Activated T-helper 1 cell treated with anti-CD3 and anti-CD28 coated beads, Interleukin-12 subunit alpha, Interleukin-12 subunit beta, Interleukin-2, Interleukin-4 antibody, amounts not matched to agents 30 ng/mL and 10 ng/mL and 1 ng/mL, durations not matched to agents 14 hours and 24 hours and 36 hours (primary cell): ENCODE measurements at regions of chr22 and their contacts with region 1.

Region 1: GRCh38 chr22:46250035-46250782 is at the start of gene CDPF1:
- DNase-seq: peak; percentile 93
- H3K4me3 Mint-ChIP-seq: peak within 1 kb of the TSS; percentile 87
- H3K27ac Mint-ChIP-seq: peak within 1 kb of the TSS; percentile 74
- H3K4me1 Mint-ChIP-seq: peaks cover 31% of the 10 kb centered on the region
- H3K27me3 Mint-ChIP-seq: peaks cover 2% of the 10 kb centered on the region
- total RNA-seq, gene CDPF1: 9.5 and 14.2 TPM in 2 replicates

Region 2: DNA sequence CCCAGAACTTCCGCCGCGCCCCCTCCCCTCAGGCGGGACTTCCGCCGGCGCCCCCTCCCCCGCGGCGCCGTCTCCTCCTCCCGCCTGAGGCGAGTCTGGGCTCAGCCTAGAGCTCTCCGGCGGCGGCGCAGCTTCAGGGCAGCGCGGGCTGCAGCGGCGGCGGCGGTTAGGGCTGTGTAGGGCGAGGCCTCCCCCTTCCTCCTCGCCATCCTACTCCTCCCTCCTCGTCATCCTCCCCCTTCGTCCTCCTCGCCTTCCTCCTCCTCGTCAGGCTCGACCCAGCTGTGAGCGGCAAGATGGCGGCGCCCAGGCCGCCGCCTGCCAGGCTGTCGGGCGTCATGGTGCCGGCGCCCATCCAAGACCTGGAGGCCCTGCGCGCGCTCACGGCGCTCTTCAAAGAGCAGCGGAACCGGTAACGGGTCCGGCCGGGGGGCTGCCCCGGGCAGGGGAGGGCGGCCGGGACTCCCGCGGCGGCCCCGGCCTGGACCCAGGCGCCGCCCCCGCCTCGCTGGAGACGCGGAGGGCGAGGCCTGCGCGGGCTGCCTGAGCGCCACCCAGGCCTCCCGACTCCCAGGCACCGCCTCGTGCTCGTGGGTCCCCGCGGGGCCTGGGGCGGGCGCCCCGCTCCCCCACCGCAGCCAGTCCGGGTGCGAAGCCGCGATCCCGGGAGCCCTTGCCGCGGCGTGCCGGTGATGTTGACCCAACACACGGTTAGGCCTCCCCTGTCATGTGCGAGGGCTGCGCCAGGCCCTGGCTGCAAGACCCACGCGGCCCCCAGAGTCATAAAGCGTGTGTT is 578.2 kb before region 1 on chr22 and contains the start of gene ATXN10:
- intact Hi-C with region 1: loop called (anchors 5 kb)
- DNase-seq: peak; percentile 69
- H3K4me3 Mint-ChIP-seq: peak within 1 kb of the TSS; percentile 96
- H3K27ac Mint-ChIP-seq: peak within 1 kb of the TSS; percentile 89
- H3K4me1 Mint-ChIP-seq: peaks cover 33% of the 10 kb centered on the region
- H3K27me3 Mint-ChIP-seq: peaks cover 4% of the 10 kb centered on the region
- total RNA-seq, gene ATXN10: 110 and 119 TPM in 2 replicates

Region 3: GRCh38 chr22:46150034-46150654 is 100.1 kb before region 1 on chr22 and contains the start of gene PPARA:
- intact Hi-C with region 1: loop called (anchors 1 kb)
- DNase-seq: peak; percentile 88
- H3K4me3 Mint-ChIP-seq: peak within 1 kb of the TSS; percentile 85
- H3K27ac Mint-ChIP-seq: peak within 1 kb of the TSS; percentile 63
- H3K4me1 Mint-ChIP-seq: peaks cover 18% of the 10 kb centered on the region
- H3K27me3 Mint-ChIP-seq: peaks cover 21% of the 10 kb centered on the region
- total RNA-seq, gene PPARA: 11.6 and 14.3 TPM in 2 replicates

Region 4: DNA sequence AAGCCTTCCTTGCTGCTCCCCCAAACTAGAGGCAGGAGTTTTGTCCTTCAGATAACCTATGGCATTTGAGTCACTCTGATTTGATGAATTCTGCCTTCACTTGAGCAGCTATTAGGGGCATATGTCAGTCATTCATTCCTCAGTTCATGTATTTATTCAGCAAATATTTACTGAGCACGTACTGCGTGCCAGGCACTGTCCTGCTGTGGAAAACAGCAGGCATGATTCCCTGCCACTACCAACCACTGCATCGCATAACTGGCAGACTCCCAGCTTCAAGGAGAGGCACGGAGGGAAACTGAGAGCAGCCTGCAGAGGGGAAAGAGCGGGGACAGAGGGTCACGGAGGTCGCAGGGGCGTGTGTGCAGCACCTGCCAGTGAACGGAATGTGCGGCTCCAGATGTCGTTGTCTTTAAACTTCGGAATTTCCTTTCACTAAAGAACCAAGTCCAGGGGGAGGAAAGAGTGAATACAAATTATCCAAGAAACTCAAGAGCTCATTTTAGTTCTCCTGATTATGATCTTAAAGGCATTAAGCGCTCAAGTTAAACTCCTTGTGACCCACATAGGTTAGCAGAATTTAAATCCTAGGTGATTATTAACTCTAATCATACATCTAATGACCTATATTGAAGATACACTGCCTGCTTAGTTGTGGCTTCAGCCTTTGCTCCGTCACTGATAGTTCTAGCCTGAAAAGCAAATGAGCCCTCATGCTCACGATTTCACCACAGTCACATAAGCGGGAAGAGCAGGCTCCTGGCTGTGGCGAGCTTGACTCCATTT is 87.2 kb before region 1 on chr22:
- intact Hi-C with region 1: no loop called
- DNase-seq: no peak
- H3K4me3 Mint-ChIP-seq: no peak overlapping the region
- H3K27ac Mint-ChIP-seq: no peak overlapping the region
- H3K4me1 Mint-ChIP-seq: no peaks in the 10 kb centered on the region
- H3K27me3 Mint-ChIP-seq: no peaks in the 10 kb centered on the region

Region 5: DNA sequence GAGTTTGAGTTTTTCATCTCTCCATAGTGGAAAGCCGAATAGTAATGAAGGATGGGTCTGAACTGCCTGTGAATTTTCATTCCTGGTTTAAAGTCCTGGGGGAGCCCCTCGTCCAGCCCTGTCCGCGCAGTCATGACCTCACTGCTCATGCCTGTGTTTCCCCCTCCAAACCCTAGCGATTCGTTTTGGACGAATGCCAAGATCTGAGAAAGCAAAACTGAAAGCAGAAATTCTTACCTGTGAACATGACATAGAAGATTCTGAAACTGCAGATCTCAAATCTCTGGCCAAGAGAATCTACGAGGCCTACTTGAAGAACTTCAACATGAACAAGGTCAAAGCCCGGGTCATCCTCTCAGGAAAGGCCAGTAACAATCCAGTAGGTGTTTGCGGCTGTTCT is 30.6 kb before region 1 on chr22:
- intact Hi-C with region 1: no loop called
- DNase-seq: peak; percentile 18
- H3K4me3 Mint-ChIP-seq: no peak overlapping the region
- H3K27ac Mint-ChIP-seq: peak overlapping the region; percentile 67
- H3K4me1 Mint-ChIP-seq: peaks cover 22% of the 10 kb centered on the region
- H3K27me3 Mint-ChIP-seq: no peaks in the 10 kb centered on the region

Region 6: GRCh38 chr22:46239261-46240048 is 10.8 kb before region 1 on chr22:
- intact Hi-C with region 1: loop called (anchors 1 kb)
- DNase-seq: no peak
- H3K4me3 Mint-ChIP-seq: peak overlapping the region; percentile 2
- H3K27ac Mint-ChIP-seq: no peak overlapping the region
- H3K4me1 Mint-ChIP-seq: peaks cover 17% of the 10 kb centered on the region
- H3K27me3 Mint-ChIP-seq: no peaks in the 10 kb centered on the region

Region 7: GRCh38 chr22:46267431-46268279 is 17.4 kb after region 1 on chr22 and contains the start of gene TTC38:
- intact Hi-C with region 1: loop called (anchors 1 kb)
- DNase-seq: peak; percentile 40
- H3K4me3 Mint-ChIP-seq: peak within 1 kb of the TSS; percentile 93
- H3K27ac Mint-ChIP-seq: peak within 1 kb of the TSS; percentile 73
- H3K4me1 Mint-ChIP-seq: peaks cover 18% of the 10 kb centered on the region
- H3K27me3 Mint-ChIP-seq: peaks cover 24% of the 10 kb centered on the region
- total RNA-seq, gene TTC38: 23.0 and 30.2 TPM in 2 replicates

Region 8: DNA sequence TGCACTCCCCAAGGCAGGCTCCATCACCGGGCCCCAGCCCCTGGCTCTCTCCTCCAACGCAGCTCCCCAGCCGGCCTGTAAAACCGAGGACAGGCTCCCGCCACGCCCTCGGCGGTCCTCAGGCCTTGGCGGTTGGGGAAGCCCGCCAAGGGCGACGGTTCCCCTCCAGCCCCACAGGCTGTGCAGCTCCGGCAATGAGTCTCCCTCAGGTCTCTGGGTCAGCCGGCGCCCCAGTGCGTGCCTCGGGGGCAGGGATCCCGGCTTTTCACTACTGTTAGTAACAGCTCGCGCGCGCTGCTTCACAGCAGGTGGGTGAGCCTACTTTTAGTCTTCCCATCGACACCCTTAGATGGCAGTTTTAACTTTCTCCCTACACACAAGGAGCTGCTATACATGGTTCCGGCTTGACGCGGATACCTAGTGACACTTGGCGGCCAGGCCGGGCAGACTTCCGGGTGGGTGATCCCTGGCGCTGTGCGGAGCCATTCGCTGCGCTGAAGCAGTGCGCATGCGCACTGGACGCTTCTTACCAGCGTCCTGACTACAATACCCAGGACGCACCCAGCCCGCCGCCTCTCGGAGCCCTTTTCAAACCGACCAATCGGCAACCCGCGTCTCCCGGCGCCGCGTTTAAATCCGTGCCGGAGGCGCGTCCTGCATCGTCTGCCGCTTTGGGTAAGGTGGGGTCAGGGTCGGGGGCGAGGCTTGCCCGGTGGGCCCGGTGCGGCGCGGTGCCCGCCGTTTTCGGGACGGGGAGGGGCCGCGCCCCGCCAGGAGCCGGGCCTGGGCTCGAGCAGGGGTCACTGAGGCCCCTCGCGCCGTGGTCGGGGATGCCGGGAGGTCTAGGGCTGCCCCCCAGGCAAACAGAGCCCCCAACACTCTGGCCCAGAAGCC is 46.3 kb after region 1 on chr22 and contains the start of gene GTSE1:
- intact Hi-C with region 1: loop called (anchors 1 kb)
- DNase-seq: peak; percentile 97
- H3K4me3 Mint-ChIP-seq: peak within 1 kb of the TSS; percentile 91
- H3K27ac Mint-ChIP-seq: peak within 1 kb of the TSS; percentile 94
- H3K4me1 Mint-ChIP-seq: peaks cover 52% of the 10 kb centered on the region
- H3K27me3 Mint-ChIP-seq: no peaks in the 10 kb centered on the region
- total RNA-seq, gene GTSE1: 39.0 and 39.9 TPM in 2 replicates

Region 9: GRCh38 chr22:46335201-46336118 is 85.3 kb after region 1 on chr22 and contains the start of gene TRMU:
- intact Hi-C with region 1: loop called (anchors 1 kb)
- DNase-seq: peak; percentile 74
- H3K4me3 Mint-ChIP-seq: peak within 1 kb of the TSS; percentile 95
- H3K27ac Mint-ChIP-seq: peak within 1 kb of the TSS; percentile 96
- H3K4me1 Mint-ChIP-seq: peaks cover 34% of the 10 kb centered on the region
- H3K27me3 Mint-ChIP-seq: no peaks in the 10 kb centered on the region
- total RNA-seq, gene TRMU: 81.0 and 85.5 TPM in 2 replicates